CD8-positive, alpha-beta T cell (primary cell): ENCODE measurements at regions of chr14 and their contacts with region 1.

Region 1: DNA sequence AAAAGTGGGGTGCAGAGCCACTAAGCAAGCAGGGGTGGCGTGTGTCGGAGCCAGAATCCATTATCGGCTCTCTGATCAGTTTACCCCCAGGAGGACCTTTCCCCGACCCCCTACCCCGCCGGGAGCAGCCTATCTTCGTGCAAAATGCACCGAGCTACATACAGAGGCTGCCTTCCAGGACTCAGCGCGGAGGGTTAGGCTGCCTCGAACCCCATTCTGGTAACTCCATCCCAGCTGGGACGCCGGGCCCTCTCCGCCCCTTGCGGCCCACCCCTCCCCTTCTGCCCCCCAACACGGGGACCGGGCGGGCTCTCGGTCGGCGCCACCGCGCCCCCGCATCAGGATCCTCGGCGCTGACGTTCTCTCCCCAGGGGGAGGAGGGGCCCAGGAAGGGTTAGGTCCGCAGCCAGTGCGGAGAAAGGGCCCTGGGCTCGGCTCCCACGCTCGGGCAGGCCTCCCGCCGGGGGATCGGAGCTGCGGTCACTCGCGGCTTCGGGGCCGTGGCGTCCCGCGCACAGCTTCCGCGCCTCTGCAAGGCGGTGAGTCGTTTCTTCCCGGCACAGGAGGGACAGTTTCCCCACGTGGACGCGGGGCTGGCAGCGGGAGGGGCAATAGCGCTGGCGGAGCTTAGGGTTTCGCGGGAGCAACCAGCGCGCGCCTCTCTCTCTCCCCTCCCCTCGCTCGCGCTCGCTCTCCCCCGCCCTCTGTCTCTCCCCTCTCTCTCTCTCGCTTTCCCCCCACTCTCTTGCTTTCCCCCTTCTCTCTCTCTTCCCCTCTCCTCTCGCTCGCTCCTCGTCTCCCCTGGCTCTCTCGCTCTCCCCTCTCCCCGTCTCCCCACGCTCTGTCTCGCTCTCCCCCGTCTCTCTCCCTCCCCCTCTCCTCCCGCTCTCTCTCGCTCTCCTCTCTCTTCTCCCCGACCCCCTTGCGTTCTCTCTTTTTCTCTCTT is 12.5 kb upstream of the MAP3K9 start:
- DNase-seq: peak in 8 of 9 experiments; percentile 35 to 73 (median 58)
- ATAC-seq: peak; percentile 39
- H3K4me3 ChIP-seq: peak overlapping the region; percentile 57 to 67
- H3K4me3 Mint-ChIP-seq: peak overlapping the region; percentile 76
- H3K27ac ChIP-seq: peak overlapping the region in 1 of 2 experiments; percentile 15
- H3K27ac Mint-ChIP-seq: no peak overlapping the region
- H3K4me1 ChIP-seq: peaks cover 17% of the 10 kb centered on the region
- H3K4me1 Mint-ChIP-seq: peaks cover 16% of the 10 kb centered on the region
- H3K27me3 ChIP-seq: no peaks in the 10 kb centered on the region
- H3K27me3 Mint-ChIP-seq: peaks cover 7% of the 10 kb centered on the region
- CTCF ChIP-seq: no peak

Region 2: GRCh38 chr14:70350078-70350477 is 471.8 kb before region 1 on chr14:
- CTCF ChIA-PET with region 1: no interaction called
- POLR2A ChIA-PET with region 1: no interaction called
- intact Hi-C with region 1: no loop called
- DNase-seq: no peak
- ATAC-seq: no peak
- H3K4me3 ChIP-seq: no peak overlapping the region
- H3K4me3 Mint-ChIP-seq: no peak overlapping the region
- H3K27ac ChIP-seq: no peak overlapping the region
- H3K27ac Mint-ChIP-seq: no peak overlapping the region
- H3K4me1 ChIP-seq: peaks cover 6% of the 10 kb centered on the region
- H3K4me1 Mint-ChIP-seq: peaks cover 15% of the 10 kb centered on the region
- H3K27me3 ChIP-seq: no peaks in the 10 kb centered on the region
- H3K27me3 Mint-ChIP-seq: no peaks in the 10 kb centered on the region
- CTCF ChIP-seq: no peak

Region 3: DNA sequence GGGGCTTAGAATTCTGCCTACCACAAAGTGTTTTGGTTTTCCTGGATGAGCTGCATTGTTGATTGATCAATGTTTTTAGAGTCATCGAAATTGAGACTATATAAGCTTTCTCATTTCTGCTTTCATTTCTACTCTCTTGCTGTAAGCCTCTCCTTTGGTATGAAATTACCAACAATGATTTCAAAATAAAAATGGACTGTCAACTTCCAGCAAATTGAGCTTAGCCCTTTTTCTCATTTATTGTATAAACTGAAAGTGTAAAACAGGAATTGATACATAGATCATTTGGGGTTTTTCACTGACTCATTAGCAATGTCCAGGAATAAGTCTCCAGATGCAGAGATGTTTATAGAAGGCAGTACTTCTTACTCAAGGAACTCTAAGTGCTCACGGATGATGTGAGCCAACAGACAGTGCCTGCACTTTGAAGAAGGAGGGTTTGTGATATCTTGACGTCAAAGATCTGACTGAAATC is 65.4 kb after region 1 on chr14:
- CTCF ChIA-PET with region 1: interaction called, 15 read pairs
- POLR2A ChIA-PET with region 1: no interaction called
- intact Hi-C with region 1: no loop called
- DNase-seq: peak in 1 of 9 experiments; percentile 37
- ATAC-seq: peak; percentile 19
- H3K4me3 ChIP-seq: peak overlapping the region in 1 of 2 experiments; percentile 21
- H3K4me3 Mint-ChIP-seq: peak overlapping the region; percentile 58
- H3K27ac ChIP-seq: peak overlapping the region in 1 of 2 experiments; percentile 58
- H3K27ac Mint-ChIP-seq: peak overlapping the region; percentile 69
- H3K4me1 ChIP-seq: peaks cover 67% of the 10 kb centered on the region
- H3K4me1 Mint-ChIP-seq: peaks cover 69% of the 10 kb centered on the region
- H3K27me3 ChIP-seq: no peaks in the 10 kb centered on the region
- H3K27me3 Mint-ChIP-seq: no peaks in the 10 kb centered on the region
- CTCF ChIP-seq: no peak

Region 4: GRCh38 chr14:70972107-70972976 is 150.5 kb after region 1 on chr14:
- CTCF ChIA-PET with region 1: interaction called, 51 read pairs
- POLR2A ChIA-PET with region 1: interaction called, 7 read pairs
- intact Hi-C with region 1: loop called (anchors 1 kb)
- DNase-seq: peak; percentile 65 to 90 (median 85)
- ATAC-seq: peak; percentile 81
- H3K4me3 ChIP-seq: no peak overlapping the region
- H3K4me3 Mint-ChIP-seq: no peak overlapping the region
- H3K27ac ChIP-seq: peak overlapping the region in 1 of 2 experiments; percentile 0
- H3K27ac Mint-ChIP-seq: peak overlapping the region; percentile 53
- H3K4me1 ChIP-seq: peaks cover 25% of the 10 kb centered on the region
- H3K4me1 Mint-ChIP-seq: peaks cover 48% of the 10 kb centered on the region
- H3K27me3 ChIP-seq: no peaks in the 10 kb centered on the region
- H3K27me3 Mint-ChIP-seq: no peaks in the 10 kb centered on the region
- CTCF ChIP-seq: peak; percentile 81

Region 5: GRCh38 chr14:70981000-70981952 is 159.4 kb after region 1 on chr14:
- CTCF ChIA-PET with region 1: interaction called, 38 read pairs
- POLR2A ChIA-PET with region 1: interaction called, 3 read pairs
- intact Hi-C with region 1: no loop called
- DNase-seq: peak in 1 of 9 experiments; percentile 37
- ATAC-seq: peak; percentile 59
- H3K4me3 ChIP-seq: peak overlapping the region in 1 of 2 experiments; percentile 1
- H3K4me3 Mint-ChIP-seq: peak overlapping the region; percentile 59
- H3K27ac ChIP-seq: peak overlapping the region in 1 of 2 experiments; percentile 60
- H3K27ac Mint-ChIP-seq: peak overlapping the region; percentile 88
- H3K4me1 ChIP-seq: peaks cover 32% of the 10 kb centered on the region
- H3K4me1 Mint-ChIP-seq: peaks cover 63% of the 10 kb centered on the region
- H3K27me3 ChIP-seq: no peaks in the 10 kb centered on the region
- H3K27me3 Mint-ChIP-seq: no peaks in the 10 kb centered on the region
- CTCF ChIP-seq: no peak

Region 6: GRCh38 chr14:71651228-71651627 is 829.4 kb after region 1 on chr14:
- CTCF ChIA-PET with region 1: no interaction called
- POLR2A ChIA-PET with region 1: no interaction called
- intact Hi-C with region 1: no loop called
- DNase-seq: no peak
- ATAC-seq: no peak
- H3K4me3 ChIP-seq: no peak overlapping the region
- H3K4me3 Mint-ChIP-seq: no peak overlapping the region
- H3K27ac ChIP-seq: no peak overlapping the region
- H3K27ac Mint-ChIP-seq: no peak overlapping the region
- H3K4me1 ChIP-seq: no peaks in the 10 kb centered on the region
- H3K4me1 Mint-ChIP-seq: no peaks in the 10 kb centered on the region
- H3K27me3 ChIP-seq: no peaks in the 10 kb centered on the region
- H3K27me3 Mint-ChIP-seq: no peaks in the 10 kb centered on the region
- CTCF ChIP-seq: no peak